ENCODE measurements at regions of chr9 and their contacts with region 1.

Region 1: GRCh38 chr9:37144762-37145161 is 24.4 kb downstream of the ZCCHC7 start:
- DNase-seq: peak; percentile 42
- H3K4me3 ChIP-seq: no peak overlapping the region
- H3K27ac ChIP-seq: peak overlapping the region; percentile 44
- H3K4me1 ChIP-seq: peaks cover 91% of the 10 kb centered on the region
- H3K27me3 ChIP-seq: no peaks in the 10 kb centered on the region
- CTCF ChIP-seq: no peak

Region 2: DNA sequence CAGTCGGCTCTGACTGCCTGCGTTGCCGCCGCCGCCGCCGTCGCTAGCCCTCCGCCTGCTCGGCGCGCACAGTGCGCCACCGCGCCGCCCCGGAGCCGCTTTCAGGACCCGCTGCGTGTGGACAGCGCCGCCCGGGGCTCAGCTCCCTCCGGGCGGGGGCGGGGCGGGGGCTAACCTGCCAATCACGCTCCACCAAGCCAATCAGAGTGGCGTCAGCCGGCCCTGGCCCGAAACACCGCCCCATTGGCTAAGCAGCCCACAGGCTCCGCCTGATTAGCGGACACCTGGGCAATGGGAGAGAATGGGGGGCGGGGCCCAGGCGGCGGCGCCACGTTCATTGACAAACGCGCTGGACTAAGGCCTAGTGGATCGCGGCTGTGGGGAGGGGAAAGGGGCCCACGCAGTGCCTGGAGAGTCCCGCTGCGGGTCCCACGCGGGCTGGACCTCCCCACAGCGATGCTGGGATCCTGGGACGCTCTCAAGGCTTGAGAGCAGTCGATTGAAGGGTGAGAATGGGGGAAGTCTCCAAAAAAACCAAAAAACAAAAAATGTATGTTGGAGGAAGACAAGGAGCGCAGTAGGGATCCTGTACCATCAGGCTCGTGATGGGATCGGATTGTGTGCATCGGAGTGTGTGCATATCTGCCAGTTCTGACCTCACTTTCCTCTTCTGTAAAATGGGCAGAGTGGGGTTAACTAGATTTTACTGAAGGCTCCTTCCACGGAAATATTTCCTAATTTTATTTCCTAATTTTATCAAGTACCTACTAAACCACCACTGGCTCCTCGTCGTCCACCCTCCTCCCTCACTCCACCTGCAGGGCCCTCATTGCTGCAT is 117.0 kb before region 1 on chr9:
- CTCF ChIA-PET with region 1: no interaction called
- POLR2A ChIA-PET with region 1: no interaction called
- intact Hi-C with region 1: loop called (anchors 5 kb)
- DNase-seq: peak; percentile 99
- H3K4me3 ChIP-seq: peak overlapping the region; percentile 56
- H3K27ac ChIP-seq: no peak overlapping the region
- H3K4me1 ChIP-seq: no peaks in the 10 kb centered on the region
- H3K27me3 ChIP-seq: peaks cover 9% of the 10 kb centered on the region
- CTCF ChIP-seq: no peak

Region 3: DNA sequence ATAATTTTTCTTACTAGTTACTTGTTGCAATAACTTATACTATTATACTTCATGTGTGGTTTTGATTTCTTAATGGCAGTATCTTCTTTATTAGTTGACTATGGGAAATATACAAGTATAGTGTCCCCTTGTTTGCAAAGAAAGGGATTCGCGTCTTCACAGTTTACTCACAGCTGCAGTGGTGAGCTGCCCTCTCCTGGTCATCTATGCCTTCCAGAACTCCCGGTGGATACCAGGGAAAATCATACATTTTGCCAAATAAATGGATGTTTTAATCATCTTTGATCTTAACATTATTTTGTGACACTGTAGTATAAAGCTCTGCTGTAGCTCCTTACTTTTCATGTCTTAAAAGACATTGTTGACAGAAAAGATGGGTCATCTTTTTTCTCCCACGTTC is 117.6 kb after region 1 on chr9:
- CTCF ChIA-PET with region 1: no interaction called
- POLR2A ChIA-PET with region 1: no interaction called
- intact Hi-C with region 1: loop called (anchors 10 kb)
- DNase-seq: peak; percentile 68
- H3K4me3 ChIP-seq: no peak overlapping the region
- H3K27ac ChIP-seq: no peak overlapping the region
- H3K4me1 ChIP-seq: peaks cover 11% of the 10 kb centered on the region
- H3K27me3 ChIP-seq: no peaks in the 10 kb centered on the region
- CTCF ChIP-seq: peak; percentile 80